ENCODE measurements at regions of chr15 and their contacts with region 1.

Region 1: DNA sequence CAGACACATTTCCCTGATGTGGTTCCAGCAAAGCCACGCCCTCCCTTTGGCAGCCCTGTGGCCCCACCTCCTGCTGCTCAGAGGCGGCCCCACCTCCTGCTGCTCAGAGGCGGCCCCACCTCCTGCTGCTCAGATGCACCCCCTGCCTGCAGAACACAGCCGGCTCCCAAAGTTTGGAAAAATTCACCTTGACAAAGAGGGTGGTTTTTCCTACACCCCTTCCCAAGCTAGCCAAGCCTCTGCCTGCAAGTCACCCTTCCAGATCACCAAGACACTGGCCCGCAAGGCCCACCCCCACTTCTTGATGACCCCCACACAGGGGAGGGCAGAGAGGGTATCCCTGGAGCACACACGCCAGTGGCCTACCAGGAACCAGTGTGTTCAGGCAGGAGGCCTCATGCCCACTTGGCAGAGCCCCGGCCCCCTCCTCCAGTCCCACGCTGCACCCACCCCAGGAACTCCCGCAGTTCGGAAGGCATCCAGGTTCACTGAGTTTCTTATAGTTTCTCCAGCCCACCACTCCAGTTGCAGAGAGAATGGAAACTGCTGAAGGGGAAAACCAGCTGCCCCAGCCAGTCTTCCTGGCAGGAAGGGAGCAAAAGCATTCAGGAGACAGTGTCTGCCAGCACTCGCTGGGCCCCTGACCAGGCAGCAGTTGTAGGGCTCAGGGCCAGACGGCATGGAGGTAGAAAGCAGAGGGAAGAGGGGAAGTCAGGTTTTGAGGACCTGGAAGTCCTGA is 2.3 kb upstream of the HAPLN3 start:
- DNase-seq: peak; percentile 78 to 96
- ATAC-seq: peak; percentile 49 to 83 (median 75)
- H3K4me3 ChIP-seq: no peak overlapping the region
- H3K27ac ChIP-seq: peak overlapping the region; percentile 74
- H3K4me1 ChIP-seq: peaks cover 31% of the 10 kb centered on the region
- H3K27me3 ChIP-seq: peaks cover 0 to 2% (median 0%) of the 10 kb centered on the region in 3 donors
- CTCF ChIP-seq: peak; percentile 53

Region 2: GRCh38 chr15:88620995-88621772 is 276.4 kb before region 1 on chr15 and contains the start of gene AEN:
- intact Hi-C with region 1: loop called in 1 of 2 experiments (anchors 5 kb)
- DNase-seq: peak; percentile 96 to 98
- ATAC-seq: peak; percentile 98 to 100 (median 98)
- H3K4me3 ChIP-seq: peak within 1 kb of the TSS; percentile 74
- H3K27ac ChIP-seq: peak within 1 kb of the TSS; percentile 92
- H3K4me1 ChIP-seq: peaks cover 26% of the 10 kb centered on the region
- H3K27me3 ChIP-seq: no peaks in the 10 kb centered on the region
- CTCF ChIP-seq: no peak
- total RNA-seq, gene AEN: 10.1 to 46.6 (median 27.8) TPM

Region 3: GRCh38 chr15:88657326-88658069 is 240.1 kb before region 1 on chr15:
- intact Hi-C with region 1: loop called in 1 of 2 experiments (anchors 10 kb)
- DNase-seq: no peak
- ATAC-seq: peak; percentile 44 to 75 (median 54)
- H3K4me3 ChIP-seq: no peak overlapping the region
- H3K27ac ChIP-seq: no peak overlapping the region
- H3K4me1 ChIP-seq: no peaks in the 10 kb centered on the region
- H3K27me3 ChIP-seq: no peaks in the 10 kb centered on the region
- CTCF ChIP-seq: peak; percentile 58

Measured in psoas muscle (tissue), 8 donors.